Sigmoid colon (tissue), 7 donors: ENCODE measurements at regions of chr4 and their contacts with region 1.

Region 1: GRCh38 chr4:121096629-121097028 is 24.3 kb upstream of the NDNF start:
- DNase-seq: no peak
- H3K4me3 ChIP-seq: no peak overlapping the region
- H3K27ac ChIP-seq: no peak overlapping the region
- H3K4me1 ChIP-seq: no peaks in the 10 kb centered on the region
- H3K27me3 ChIP-seq: no peaks in the 10 kb centered on the region
- CTCF ChIP-seq: peak in 3 of 4 experiments; percentile 16 to 62 (median 30)
- EP300 ChIP-seq: no peak
- POLR2A ChIP-seq: no peak

Region 2: GRCh38 chr4:120071192-120071795 is 1025.3 kb before region 1 on chr4:
- intact Hi-C with region 1: loop called (anchors 5 kb)
- DNase-seq: no peak
- H3K4me3 ChIP-seq: no peak overlapping the region
- H3K27ac ChIP-seq: no peak overlapping the region
- H3K4me1 ChIP-seq: peaks cover 0 to 25% (median 13%) of the 10 kb centered on the region in 4 donors
- H3K27me3 ChIP-seq: no peaks in the 10 kb centered on the region
- CTCF ChIP-seq: peak in 3 of 4 experiments; percentile 22 to 70 (median 62)
- EP300 ChIP-seq: no peak
- POLR2A ChIP-seq: no peak

Region 3: DNA sequence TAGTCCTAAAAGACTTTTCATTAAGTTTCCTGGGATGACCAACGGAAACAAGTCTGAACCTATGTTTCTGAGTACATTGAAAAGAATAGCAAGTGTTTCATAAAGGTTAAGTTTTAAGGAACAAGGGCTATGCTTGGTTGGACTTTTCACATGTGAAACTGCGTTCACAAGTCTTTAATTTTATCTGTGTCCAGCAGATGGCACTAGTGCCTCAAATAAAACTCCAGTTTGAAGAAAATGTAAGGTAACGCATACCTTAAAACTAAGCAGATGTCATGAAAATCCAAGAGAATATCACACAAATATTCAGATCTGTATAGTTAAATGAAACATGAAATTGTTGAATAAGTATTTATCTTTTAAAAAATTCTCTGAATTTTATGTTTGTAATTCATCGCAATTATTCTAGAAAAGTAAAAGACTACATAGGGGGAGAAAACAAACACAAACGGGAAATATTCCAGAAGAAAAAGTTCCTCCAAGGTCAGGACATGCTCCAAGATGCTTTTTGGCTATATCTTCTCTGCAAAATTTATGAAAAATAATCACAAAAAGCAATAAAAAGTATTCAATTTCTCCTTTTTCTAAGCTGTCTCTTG is 940.4 kb before region 1 on chr4:
- intact Hi-C with region 1: loop called (anchors 2 kb)
- DNase-seq: no peak
- H3K4me3 ChIP-seq: no peak overlapping the region
- H3K27ac ChIP-seq: no peak overlapping the region
- H3K4me1 ChIP-seq: no peaks in the 10 kb centered on the region
- H3K27me3 ChIP-seq: no peaks in the 10 kb centered on the region
- CTCF ChIP-seq: peak; percentile 42 to 64 (median 58)
- EP300 ChIP-seq: no peak
- POLR2A ChIP-seq: no peak

Region 4: DNA sequence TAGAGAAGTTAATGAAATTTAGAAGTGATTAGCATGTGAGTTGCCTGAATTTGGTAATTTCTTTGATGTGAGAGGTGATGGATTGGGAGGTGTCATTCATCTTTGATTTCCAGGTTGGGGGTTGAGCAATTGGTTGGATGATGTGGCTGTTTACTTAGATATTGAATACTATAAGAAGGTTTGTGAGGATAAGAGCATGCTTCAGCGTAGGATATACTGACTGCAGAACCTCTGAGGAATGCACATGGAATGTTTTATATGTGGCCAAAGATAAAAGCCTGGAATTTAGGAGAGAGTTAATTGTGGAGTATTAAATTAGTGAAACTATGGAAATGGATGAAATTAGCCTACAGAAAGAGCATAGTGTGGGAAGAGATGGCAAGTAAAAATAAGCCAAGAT is 864.6 kb before region 1 on chr4:
- intact Hi-C with region 1: no loop called
- DNase-seq: no peak
- H3K4me3 ChIP-seq: no peak overlapping the region
- H3K27ac ChIP-seq: no peak overlapping the region
- H3K4me1 ChIP-seq: peaks cover 0 to 13% (median 8%) of the 10 kb centered on the region in 4 donors
- H3K27me3 ChIP-seq: no peaks in the 10 kb centered on the region
- CTCF ChIP-seq: no peak
- EP300 ChIP-seq: no peak
- POLR2A ChIP-seq: no peak

Region 5: DNA sequence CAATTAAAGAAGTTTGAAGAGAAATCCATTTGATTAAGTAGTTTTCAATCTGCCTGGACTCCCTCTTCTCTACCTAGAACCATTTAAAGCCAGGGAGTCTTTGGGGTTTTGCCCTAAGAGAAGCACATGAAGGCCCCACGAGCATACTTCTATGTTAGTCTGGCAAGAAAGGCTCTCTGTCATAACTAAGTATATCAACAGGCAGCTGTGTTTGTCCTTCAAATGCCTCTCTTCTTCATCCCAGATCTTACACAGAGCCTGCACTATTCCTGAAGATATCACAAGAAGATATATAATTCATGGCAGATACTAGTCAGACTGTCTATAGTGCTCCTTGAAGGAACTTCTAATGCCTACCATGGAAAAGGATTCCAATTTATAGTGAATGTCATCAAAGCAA is 380.3 kb before region 1 on chr4:
- intact Hi-C with region 1: loop called (anchors 2 kb)
- DNase-seq: no peak
- H3K4me3 ChIP-seq: no peak overlapping the region
- H3K27ac ChIP-seq: no peak overlapping the region
- H3K4me1 ChIP-seq: peaks cover 0 to 5% (median 0%) of the 10 kb centered on the region in 4 donors
- H3K27me3 ChIP-seq: no peaks in the 10 kb centered on the region
- CTCF ChIP-seq: no peak
- EP300 ChIP-seq: no peak
- POLR2A ChIP-seq: no peak